SK-N-SH (cell line): ENCODE measurements at regions of chr6 and their contacts with region 1.

Region 1: GRCh38 chr6:132798869-132799538 is 567 bp upstream of the SLC18B1 start:
- DNase-seq: peak; percentile 61
- H3K4me3 ChIP-seq: peak overlapping the region; percentile 50 to 68; a peak in 2 of 4 replicates
- H3K27ac ChIP-seq: no peak overlapping the region
- H3K4me1 ChIP-seq: no peaks in the 10 kb centered on the region; a peak in 1 of 4 replicates
- H3K27me3 ChIP-seq: peaks cover 21% of the 10 kb centered on the region; the same call in 1 of the 2 replicates
- CTCF ChIP-seq: peak; percentile 87
- EP300 ChIP-seq: no peak
- RAD21 ChIP-seq: peak; percentile 55

Region 2: GRCh38 chr6:132669690-132670291 is 129.2 kb before region 1 on chr6:
- CTCF ChIA-PET with region 1: interaction called, 10 read pairs
- POLR2A ChIA-PET with region 1: no interaction called
- DNase-seq: peak; percentile 8
- H3K4me3 ChIP-seq: no peak overlapping the region
- H3K27ac ChIP-seq: no peak overlapping the region
- H3K4me1 ChIP-seq: no peaks in the 10 kb centered on the region
- H3K27me3 ChIP-seq: no peaks in the 10 kb centered on the region
- CTCF ChIP-seq: peak; percentile 62
- EP300 ChIP-seq: no peak
- RAD21 ChIP-seq: peak; percentile 58

Region 3: DNA sequence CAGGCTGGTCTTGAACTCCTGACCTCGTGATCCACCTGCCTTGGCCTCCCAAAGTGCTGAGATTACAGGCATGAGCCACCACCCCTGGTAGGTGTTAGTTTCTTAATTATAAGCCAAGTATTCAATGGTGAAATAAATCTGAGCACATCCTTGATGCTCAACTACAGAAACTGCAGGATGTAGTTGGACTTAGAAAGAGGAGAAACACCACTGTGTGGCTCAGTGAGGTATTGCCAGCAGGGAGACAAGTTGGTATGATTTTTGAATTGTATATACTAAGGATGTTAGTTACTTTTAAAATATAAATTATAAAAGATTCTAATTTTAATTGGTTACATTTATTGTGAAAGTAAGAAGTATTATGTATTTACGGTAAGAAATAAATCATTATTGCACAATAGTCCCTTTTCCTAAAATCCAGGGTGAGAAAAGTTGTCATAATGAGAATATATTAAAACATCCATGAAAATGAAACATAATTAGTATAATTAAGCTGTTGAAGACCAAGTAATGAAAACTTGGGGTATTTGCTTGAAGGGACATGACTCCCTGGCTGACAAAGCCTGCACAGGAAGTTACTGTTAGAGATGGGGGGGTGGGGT is 18.1 kb before region 1 on chr6:
- CTCF ChIA-PET with region 1: interaction called, 10 read pairs
- POLR2A ChIA-PET with region 1: no interaction called
- DNase-seq: no peak
- H3K4me3 ChIP-seq: no peak overlapping the region
- H3K27ac ChIP-seq: no peak overlapping the region
- H3K4me1 ChIP-seq: no peaks in the 10 kb centered on the region
- H3K27me3 ChIP-seq: peaks cover 10% of the 10 kb centered on the region; the same call in 1 of the 2 replicates
- CTCF ChIP-seq: peak; percentile 45
- EP300 ChIP-seq: no peak
- RAD21 ChIP-seq: peak; percentile 38